ENCODE measurements at regions of chr17 and their contacts with region 1.

Region 1: GRCh38 chr17:75105618-75106384 is 4.0 kb upstream of the ARMC7 start:
- DNase-seq: peak; percentile 58
- H3K27ac ChIP-seq: peak overlapping the region; percentile 46
- CTCF ChIP-seq: peak; percentile 89

Region 2: DNA sequence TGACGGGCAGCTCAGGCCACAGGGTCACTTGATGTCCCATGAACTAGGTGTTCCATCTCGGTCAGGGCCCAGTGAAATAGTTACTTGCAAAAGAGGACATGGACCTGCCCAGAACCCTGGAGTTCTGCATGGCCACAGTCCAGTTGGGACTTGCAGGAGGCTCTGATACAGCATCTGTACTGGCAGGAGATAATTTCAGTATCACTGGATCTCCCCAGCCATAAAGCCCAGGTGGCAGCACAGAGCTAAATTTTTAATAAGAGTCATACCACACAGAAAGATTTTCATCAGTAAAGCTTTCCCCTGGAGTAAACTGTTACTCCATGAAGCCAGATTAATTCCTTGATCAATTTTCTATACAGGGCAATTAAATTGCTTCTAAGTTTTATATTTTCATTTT is 36.0 kb before region 1 on chr17:
- CTCF ChIA-PET with region 1: interaction called, 28 read pairs
- POLR2A ChIA-PET with region 1: interaction called, 3 read pairs
- DNase-seq: peak; percentile 54
- H3K27ac ChIP-seq: no peak overlapping the region
- CTCF ChIP-seq: peak; percentile 64

Region 3: DNA sequence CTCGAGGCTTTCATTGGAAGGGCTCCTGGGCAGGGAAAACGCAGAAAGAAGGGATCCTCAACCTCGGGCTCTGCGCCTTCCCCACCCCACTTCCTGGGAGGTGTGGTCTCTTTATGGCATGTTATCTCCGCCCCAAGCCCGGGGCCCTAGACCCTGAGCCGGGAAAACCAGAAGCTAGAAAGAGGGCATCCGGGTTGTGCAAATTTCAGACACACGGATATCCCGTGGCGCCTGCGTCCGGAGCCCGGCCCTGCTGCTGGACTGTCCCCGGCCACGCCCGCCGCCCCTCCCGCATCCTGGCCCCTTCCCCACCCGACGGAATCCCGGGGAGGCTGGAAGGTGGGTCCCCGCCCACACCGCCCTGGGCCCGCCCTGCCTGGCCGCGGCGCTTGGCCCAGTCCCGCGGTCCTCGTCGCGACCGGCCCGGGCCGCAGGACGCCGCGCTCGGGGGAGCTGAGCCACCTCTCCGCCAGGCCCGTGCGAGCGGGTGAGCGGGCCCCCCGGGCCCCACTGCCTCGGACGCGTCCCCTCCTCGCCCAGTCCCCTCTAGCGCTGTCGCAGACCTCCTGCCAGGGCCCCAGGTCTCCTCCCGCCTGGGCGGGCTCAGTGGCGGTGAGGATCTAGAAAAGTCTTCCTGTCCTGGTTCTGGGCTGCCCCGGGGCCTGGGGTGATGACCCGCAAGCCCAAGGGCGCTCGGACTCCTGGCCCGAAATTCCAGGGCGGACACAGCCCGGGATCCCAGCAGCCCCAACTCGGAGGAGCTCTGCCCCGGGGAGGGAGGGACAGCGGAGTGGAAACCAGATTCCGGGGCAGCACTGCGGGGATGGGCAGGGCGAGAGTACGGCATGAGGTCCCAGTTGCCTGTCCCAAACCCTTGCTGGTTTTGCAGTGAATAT is 18.0 kb before region 1 on chr17 and contains the start of gene SLC16A5:
- CTCF ChIA-PET with region 1: interaction called, 10 read pairs
- POLR2A ChIA-PET with region 1: interaction called, 3 read pairs
- DNase-seq: peak; percentile 96
- H3K27ac ChIP-seq: peak within 1 kb of the TSS; percentile 98
- CTCF ChIP-seq: no peak

Measured in RWPE1 (cell line).